ENCODE measurements at regions of chr2 and their contacts with region 1.

Region 1: GRCh38 chr2:135948642-135949355 is 36.6 kb downstream of the DARS1 start:
- DNase-seq: peak; percentile 35
- H3K4me3 Mint-ChIP-seq: no peak overlapping the region
- H3K27ac Mint-ChIP-seq: peak overlapping the region; percentile 74
- H3K4me1 Mint-ChIP-seq: peaks cover 45% of the 10 kb centered on the region
- H3K27me3 Mint-ChIP-seq: no peaks in the 10 kb centered on the region

Region 2: DNA sequence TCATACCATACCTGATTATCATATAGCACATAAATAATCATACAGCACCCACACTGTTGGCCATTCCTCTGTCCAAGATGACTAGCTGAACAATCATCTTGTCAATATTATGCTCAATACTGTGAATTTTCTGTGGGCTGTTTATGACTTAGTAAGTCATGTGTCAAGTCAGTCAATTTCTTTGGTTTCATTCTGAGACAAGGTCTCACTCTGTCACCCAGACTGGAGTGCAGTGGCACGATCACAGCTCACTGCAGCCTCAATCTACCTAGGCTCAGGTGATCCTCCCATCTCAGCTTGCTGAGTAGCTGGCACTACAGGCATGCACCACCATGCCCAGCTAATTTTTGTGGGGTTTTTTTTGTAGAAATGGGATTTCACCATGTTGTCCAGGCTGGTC is 78.2 kb before region 1 on chr2:
- CTCF ChIA-PET with region 1: no interaction called
- intact Hi-C with region 1: no loop called
- DNase-seq: peak; percentile 29
- H3K4me3 Mint-ChIP-seq: no peak overlapping the region
- H3K27ac Mint-ChIP-seq: no peak overlapping the region
- H3K4me1 Mint-ChIP-seq: peaks cover 53% of the 10 kb centered on the region
- H3K27me3 Mint-ChIP-seq: no peaks in the 10 kb centered on the region

Region 3: GRCh38 chr2:135913727-135914365 is 35.0 kb before region 1 on chr2:
- CTCF ChIA-PET with region 1: interaction called, 11 read pairs
- intact Hi-C with region 1: no loop called
- DNase-seq: peak; percentile 65
- H3K4me3 Mint-ChIP-seq: no peak overlapping the region
- H3K27ac Mint-ChIP-seq: no peak overlapping the region
- H3K4me1 Mint-ChIP-seq: peaks cover 10% of the 10 kb centered on the region
- H3K27me3 Mint-ChIP-seq: no peaks in the 10 kb centered on the region

Region 4: GRCh38 chr2:135985018-135985825 is 36.4 kb after region 1 on chr2 and contains the start of gene DARS1:
- CTCF ChIA-PET with region 1: no interaction called
- intact Hi-C with region 1: loop called (anchors 1 kb)
- DNase-seq: peak; percentile 90
- H3K4me3 Mint-ChIP-seq: peak within 1 kb of the TSS; percentile 95
- H3K27ac Mint-ChIP-seq: peak within 1 kb of the TSS; percentile 97
- H3K4me1 Mint-ChIP-seq: peaks cover 39% of the 10 kb centered on the region
- H3K27me3 Mint-ChIP-seq: no peaks in the 10 kb centered on the region
- total RNA-seq, gene DARS1: 161 to 177 TPM

Region 5: DNA sequence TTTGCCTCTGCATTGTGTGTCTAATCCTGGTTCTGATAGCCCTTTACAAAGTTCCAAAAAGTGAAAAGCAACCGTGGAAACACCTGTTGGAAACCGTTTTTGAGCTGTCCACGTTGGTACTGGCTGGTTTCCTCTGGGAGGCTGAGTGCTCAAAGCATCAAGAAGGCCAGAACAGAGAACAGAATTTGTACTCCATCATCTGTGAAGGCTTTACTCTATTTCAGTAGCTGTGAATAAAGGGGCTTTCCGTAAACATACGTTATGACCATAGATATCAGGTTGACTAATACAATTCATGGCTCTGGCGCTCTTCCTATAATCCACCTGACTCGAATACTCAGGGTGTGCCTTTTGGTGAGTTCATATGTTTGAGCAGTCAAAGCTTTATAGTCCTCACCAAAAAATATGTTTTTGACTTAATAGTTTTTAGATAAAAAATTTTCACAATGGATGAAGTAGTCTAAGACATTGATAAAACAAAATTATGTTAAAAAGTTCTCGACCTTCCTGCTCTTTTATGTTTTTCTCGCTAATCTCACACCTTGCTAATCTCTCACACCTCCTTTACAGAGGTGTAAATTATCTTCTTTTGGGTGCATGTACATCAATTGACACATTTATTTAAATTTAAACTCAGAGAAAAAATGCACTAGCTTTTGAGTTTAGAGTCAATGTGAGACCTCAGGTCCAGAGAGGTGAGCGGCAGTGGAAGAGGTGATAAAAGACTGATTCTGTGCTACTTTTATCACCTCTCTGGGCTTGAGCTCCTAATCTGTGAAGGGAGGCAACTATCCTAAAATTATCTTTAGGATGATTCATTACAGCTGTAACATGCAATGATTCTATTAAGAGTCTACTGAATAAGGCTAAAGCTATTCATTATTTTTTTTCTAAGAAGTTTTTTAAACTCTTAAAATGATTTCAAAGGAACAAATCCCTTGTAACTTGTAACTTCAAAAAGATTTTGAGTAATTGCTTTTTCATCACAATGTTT is 103.9 kb after region 1 on chr2:
- CTCF ChIA-PET with region 1: no interaction called
- intact Hi-C with region 1: loop called (anchors 1 kb)
- DNase-seq: peak; percentile 53
- H3K4me3 Mint-ChIP-seq: peak overlapping the region; percentile 53
- H3K27ac Mint-ChIP-seq: peak overlapping the region; percentile 96
- H3K4me1 Mint-ChIP-seq: peaks cover 88% of the 10 kb centered on the region
- H3K27me3 Mint-ChIP-seq: no peaks in the 10 kb centered on the region

Region 6: DNA sequence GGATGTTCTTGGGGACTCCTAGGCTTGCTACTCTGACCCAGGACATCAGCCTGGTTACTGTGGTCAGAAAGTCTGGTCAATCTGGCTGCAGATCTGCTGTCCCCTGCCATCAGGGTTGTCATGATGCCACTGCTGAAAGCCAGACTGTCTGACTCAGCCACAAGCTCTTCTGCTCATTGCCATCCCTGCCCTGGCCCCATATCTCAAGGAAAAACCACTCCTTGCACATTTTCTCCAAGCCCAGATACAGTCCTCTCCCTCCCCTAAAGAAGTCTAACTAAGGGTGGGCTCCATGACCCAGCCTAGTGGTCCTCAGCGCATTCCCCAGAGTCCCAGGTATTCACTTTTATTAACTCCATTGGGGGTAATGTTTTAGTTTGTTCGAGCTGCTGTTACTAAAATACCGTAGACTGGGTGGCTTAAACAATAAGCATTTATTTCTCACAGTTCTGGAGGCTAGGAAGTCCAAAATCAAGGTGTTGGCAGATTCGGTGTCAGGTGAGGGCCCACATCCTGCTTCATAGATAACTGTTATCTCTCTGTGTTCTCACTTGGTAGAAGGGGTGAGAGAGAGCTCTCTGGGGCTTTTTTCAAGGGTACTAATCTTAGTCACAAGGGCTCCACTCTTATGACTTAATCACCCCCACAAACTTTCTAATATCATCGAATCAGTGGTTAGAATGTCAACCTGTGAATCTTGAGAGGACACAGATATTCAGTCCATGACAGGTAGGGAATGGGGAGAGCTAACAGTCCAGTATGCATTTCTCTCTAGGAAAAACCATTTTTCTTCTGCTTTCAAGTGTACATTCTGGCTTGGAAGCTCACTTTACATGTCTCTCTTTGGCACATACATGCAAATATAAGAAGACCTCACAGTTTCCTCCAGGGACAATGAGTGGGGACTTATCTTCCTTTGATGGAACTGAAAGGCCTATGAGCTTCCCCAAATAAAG is 263.9 kb after region 1 on chr2:
- CTCF ChIA-PET with region 1: no interaction called
- intact Hi-C with region 1: loop called (anchors 5 kb)
- DNase-seq: peak; percentile 67
- H3K4me3 Mint-ChIP-seq: no peak overlapping the region
- H3K27ac Mint-ChIP-seq: peak overlapping the region; percentile 3
- H3K4me1 Mint-ChIP-seq: peaks cover 43% of the 10 kb centered on the region
- H3K27me3 Mint-ChIP-seq: no peaks in the 10 kb centered on the region

Region 7: DNA sequence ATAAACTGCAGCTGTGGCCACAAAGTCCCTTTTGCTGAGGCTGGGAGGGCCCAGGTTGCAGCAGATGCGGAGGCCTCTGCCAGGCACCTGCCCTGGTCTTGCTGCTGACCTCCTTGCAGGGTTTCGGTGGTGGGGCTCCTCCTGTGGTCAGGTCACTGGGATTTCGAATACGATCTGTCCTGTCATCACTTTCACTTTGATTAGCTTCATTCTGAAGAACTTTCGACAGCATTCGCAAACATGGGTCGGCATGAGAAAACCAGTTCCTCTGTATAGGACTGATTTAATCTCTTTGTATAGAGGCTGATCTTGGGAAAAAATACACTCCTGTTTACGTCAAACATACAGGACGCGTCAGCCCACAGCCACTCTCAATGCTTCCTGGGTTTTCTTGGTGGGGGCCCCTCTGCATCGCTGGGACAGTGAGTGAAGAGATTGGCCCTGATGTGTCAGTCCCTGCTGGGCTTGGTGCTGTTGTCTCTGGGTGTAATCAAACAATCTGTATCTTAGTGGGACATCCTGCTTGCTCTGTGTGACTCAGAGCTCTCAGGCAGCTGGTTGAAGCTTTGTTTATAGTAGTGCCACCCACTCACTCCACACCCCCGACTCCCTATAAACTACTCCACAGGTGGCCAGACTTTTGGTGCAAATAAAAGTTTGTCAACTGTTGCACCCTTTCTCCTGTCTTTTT is 378.5 kb after region 1 on chr2:
- CTCF ChIA-PET with region 1: no interaction called
- intact Hi-C with region 1: loop called (anchors 1 kb)
- DNase-seq: peak; percentile 89
- H3K4me3 Mint-ChIP-seq: peak overlapping the region; percentile 52
- H3K27ac Mint-ChIP-seq: peak overlapping the region; percentile 82
- H3K4me1 Mint-ChIP-seq: peaks cover 62% of the 10 kb centered on the region
- H3K27me3 Mint-ChIP-seq: no peaks in the 10 kb centered on the region

Region 8: DNA sequence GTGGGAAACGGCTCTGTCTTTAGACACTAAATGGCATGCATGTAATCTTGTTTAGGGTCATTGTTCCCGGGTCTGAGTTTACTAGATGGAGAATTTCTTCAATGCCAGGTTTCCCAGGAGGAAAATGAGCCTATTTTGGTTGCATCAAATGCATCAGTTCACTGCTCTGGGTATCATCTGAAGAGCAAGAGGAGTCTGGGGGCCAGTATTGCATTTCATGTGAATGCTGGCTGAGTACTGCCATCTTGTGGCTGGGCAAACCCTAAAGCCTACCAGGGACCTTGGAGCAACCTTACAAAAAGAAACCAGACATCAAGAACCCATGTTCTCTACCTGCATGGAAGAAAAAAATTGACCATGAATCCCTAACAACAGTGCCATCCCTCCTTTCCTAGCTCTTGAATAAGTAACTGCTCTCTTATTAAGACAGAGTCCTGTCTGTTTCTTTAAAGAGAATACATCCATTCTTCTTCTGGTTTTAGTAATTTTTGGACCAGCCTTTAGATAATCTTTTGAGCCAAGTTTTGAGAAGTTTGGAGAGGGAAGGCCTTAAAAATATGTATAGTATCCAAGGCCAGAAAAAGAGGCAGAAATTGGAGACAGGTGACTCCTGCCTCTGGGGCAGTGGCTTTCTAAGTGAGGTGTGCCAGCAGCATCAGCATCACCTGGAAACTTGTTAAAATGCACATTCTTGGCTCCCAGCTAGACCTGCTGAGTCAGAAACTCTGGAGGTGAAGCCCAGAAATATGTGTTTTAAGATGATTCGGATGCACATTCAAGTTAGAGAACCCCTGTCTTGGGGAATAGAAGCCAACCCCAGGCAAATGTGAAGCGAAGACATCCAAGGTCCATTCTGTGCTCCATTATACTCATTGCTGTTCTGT is 430.2 kb after region 1 on chr2:
- CTCF ChIA-PET with region 1: interaction called, 5 read pairs
- intact Hi-C with region 1: loop called (anchors 1 kb)
- DNase-seq: peak; percentile 90
- H3K4me3 Mint-ChIP-seq: no peak overlapping the region
- H3K27ac Mint-ChIP-seq: no peak overlapping the region
- H3K4me1 Mint-ChIP-seq: peaks cover 79% of the 10 kb centered on the region
- H3K27me3 Mint-ChIP-seq: no peaks in the 10 kb centered on the region